Left cardiac atrium (tissue), 4 donors: ENCODE measurements at regions of chr2 and their contacts with region 1.

Region 1: GRCh38 chr2:196295005-196295404 is 123.6 kb upstream of the STK17B start:
- DNase-seq: no peak
- ATAC-seq: no peak

Region 2: GRCh38 chr2:196337208-196337953 is 42.4 kb after region 1 on chr2:
- intact Hi-C with region 1: loop called in 1 of 2 experiments (anchors 5 kb)
- DNase-seq: no peak
- ATAC-seq: peak in 1 of 2 donors; percentile 40

Region 3: DNA sequence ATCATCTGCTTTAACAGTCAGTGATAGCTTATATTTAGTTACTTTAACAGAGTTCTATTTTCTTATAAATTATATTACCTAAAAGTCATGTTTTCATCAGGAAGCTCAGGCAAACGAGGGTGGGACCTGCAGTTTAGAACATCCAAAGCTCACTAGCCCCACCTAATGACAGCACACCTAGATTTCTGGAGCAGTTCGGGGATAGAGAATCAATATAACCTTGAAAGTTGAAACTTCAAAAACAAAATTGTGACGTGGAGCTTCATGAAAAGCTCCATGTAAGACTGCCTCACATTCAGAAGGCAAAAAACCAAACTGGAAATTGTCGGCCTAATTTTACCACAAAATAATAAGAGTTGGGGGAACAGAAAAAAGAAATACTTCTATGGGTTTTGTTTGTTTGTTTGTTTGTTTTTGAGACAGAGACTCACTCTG is 158.6 kb after region 1 on chr2:
- intact Hi-C with region 1: loop called (anchors 5 kb)
- DNase-seq: no peak
- ATAC-seq: peak in 1 of 2 donors; percentile 57

Region 4: GRCh38 chr2:196758474-196759377 is 463.7 kb after region 1 on chr2:
- intact Hi-C with region 1: loop called in 1 of 2 experiments (anchors 5 kb)
- DNase-seq: no peak
- ATAC-seq: no peak